Activated T-helper 1 cell treated with anti-CD3 and anti-CD28 coated beads, Interleukin-12 subunit alpha, Interleukin-12 subunit beta, Interleukin-2, Interleukin-4 antibody, amounts not matched to agents 30 ng/mL and 10 ng/mL and 1 ng/mL, durations not matched to agents 14 hours and 24 hours and 36 hours (primary cell): ENCODE measurements at regions of chr5 and their contacts with region 1.

Region 1: GRCh38 chr5:115296124-115297022 is at the start of gene CCDC112:
- DNase-seq: peak; percentile 51
- H3K4me3 Mint-ChIP-seq: peak within 1 kb of the TSS; percentile 77
- H3K27ac Mint-ChIP-seq: no peak within 1 kb of the TSS
- H3K4me1 Mint-ChIP-seq: peaks cover 9% of the 10 kb centered on the region
- H3K27me3 Mint-ChIP-seq: peaks cover 53% of the 10 kb centered on the region
- total RNA-seq, gene CCDC112: 0.22 and 0.29 TPM in 2 replicates

Region 2: DNA sequence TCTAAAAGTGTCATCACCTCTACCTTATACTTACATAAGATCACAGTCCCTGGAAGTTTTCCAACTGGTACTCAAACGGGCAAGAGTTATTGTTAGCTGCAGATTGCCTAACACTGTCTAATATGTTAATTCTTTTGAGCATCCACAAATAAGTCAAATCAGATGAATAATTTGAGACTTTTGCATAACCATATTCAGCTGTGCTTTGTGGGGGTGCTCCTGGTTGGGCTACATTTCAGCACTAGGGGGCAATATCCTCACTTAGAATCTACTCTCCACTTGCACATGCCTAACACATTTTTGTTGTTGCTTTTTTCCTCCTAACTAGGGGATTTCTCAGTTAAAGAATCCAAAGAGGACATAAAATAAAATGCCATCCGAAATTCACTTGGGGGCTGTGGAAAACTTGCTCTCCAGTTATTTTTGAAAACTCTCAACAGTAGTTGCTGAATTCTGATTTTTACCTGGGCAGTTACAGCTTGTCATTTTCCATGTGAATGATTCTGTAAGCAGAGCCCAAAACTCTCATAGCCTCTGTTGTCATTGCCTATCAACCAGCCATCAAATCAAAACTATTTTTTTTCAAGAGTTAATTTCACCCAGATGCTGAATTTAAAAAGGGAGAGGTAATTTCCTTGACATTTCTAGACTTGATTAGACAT is 198.2 kb before region 1 on chr5:
- intact Hi-C with region 1: loop called (anchors 5 kb)
- DNase-seq: peak; percentile 8
- H3K4me3 Mint-ChIP-seq: no peak overlapping the region
- H3K27ac Mint-ChIP-seq: no peak overlapping the region
- H3K4me1 Mint-ChIP-seq: no peaks in the 10 kb centered on the region
- H3K27me3 Mint-ChIP-seq: peaks cover 7% of the 10 kb centered on the region

Region 3: DNA sequence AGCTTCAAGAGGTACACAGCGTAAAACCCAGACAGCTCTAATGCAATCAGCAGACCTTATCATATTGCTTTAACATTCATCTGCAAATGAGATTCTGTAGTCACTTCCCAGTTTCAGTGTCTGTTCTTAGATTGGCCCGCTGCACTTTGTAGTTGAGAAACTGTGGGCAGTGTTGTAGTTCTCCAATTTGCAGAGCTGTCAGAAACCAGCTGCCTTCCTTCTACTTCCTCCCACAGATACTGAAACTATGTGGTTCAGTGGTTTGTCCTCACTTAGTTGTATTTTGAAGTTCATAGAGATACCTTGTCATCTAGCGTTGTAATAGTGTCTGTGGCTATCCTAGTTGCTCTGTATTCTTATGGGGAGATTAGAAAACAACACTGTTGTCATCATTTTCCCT is 87.1 kb before region 1 on chr5:
- intact Hi-C with region 1: loop called (anchors 1 kb)
- DNase-seq: peak; percentile 59
- H3K4me3 Mint-ChIP-seq: no peak overlapping the region
- H3K27ac Mint-ChIP-seq: peak overlapping the region; percentile 28
- H3K4me1 Mint-ChIP-seq: peaks cover 17% of the 10 kb centered on the region
- H3K27me3 Mint-ChIP-seq: no peaks in the 10 kb centered on the region

Region 4: GRCh38 chr5:115246361-115246991 is 49.9 kb before region 1 on chr5:
- intact Hi-C with region 1: no loop called
- DNase-seq: no peak
- H3K4me3 Mint-ChIP-seq: no peak overlapping the region
- H3K27ac Mint-ChIP-seq: no peak overlapping the region
- H3K4me1 Mint-ChIP-seq: peaks cover 14% of the 10 kb centered on the region
- H3K27me3 Mint-ChIP-seq: no peaks in the 10 kb centered on the region

Region 5: DNA sequence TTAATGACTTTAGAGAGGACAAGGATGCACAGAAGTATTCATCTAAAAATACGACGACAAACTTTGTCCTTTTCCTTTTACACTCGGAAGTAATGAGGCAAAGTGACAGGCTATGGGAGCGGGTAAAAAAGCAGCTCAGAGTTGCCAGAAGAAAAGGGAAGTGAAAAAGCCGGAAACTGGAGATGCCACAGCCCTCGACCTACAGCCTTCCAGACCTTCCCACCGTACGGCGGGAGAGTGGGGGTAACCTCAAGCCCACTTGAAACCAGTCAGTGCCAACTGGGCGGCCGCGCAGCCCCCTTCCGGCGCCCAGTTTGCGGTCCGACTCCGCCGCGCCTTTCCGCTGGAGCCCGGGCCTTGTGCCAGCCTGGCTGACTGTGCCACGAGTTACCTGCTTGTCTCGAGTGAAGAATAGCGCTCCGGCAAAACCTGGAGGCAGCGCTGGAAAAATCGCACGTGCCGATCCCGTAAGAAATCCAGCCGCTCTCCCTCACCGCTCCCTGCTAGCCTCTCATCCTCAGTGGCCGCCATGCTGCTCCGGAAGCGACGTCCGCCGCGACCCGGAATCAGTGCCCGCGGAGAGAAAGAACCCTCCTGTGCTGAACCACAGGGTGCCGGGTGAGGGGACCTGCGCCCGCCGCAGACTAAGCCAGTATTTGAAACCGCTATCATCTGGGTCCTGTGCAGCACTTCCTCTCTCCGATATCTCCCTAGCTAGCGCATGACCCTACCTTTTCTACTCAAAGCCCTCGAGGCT is 33.9 kb before region 1 on chr5 and contains the start of gene PGGT1B:
- intact Hi-C with region 1: loop called (anchors 1 kb)
- DNase-seq: peak; percentile 64
- H3K4me3 Mint-ChIP-seq: peak within 1 kb of the TSS; percentile 97
- H3K27ac Mint-ChIP-seq: peak within 1 kb of the TSS; percentile 87
- H3K4me1 Mint-ChIP-seq: peaks cover 42% of the 10 kb centered on the region
- H3K27me3 Mint-ChIP-seq: peaks cover 3% of the 10 kb centered on the region
- total RNA-seq, gene PGGT1B: 42.7 and 42.9 TPM in 2 replicates

Region 6: DNA sequence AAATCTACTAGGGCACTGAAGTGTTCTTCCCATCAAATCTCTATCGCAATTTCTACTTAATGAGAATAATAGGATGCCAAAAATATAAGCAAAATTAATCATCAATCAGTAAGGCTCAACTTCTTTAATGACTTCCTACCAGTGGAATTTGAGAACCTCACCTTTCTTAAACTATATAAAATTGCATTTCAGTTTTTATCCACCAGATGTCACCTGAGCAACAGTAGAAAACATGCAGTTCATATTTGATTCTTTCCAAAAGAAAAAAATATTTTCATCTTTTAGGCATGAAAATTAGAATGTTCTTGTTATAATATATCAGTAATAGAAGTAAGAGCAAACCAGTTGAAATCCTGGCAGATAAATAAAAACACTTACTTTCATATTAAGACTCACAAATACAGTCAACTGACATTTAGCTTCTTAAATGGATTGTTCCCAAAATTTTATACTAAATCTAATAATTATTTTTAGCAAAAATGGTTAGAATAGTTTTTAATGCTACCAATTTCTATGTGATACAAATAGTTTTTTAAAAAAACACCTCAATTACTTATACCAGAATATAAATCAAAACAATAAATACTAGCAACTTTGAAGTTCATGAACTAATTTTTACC is 13.5 kb after region 1 on chr5:
- intact Hi-C with region 1: loop called (anchors 1 kb)
- DNase-seq: no peak
- H3K4me3 Mint-ChIP-seq: no peak overlapping the region
- H3K27ac Mint-ChIP-seq: no peak overlapping the region
- H3K4me1 Mint-ChIP-seq: no peaks in the 10 kb centered on the region
- H3K27me3 Mint-ChIP-seq: peaks cover 32% of the 10 kb centered on the region

Region 7: DNA sequence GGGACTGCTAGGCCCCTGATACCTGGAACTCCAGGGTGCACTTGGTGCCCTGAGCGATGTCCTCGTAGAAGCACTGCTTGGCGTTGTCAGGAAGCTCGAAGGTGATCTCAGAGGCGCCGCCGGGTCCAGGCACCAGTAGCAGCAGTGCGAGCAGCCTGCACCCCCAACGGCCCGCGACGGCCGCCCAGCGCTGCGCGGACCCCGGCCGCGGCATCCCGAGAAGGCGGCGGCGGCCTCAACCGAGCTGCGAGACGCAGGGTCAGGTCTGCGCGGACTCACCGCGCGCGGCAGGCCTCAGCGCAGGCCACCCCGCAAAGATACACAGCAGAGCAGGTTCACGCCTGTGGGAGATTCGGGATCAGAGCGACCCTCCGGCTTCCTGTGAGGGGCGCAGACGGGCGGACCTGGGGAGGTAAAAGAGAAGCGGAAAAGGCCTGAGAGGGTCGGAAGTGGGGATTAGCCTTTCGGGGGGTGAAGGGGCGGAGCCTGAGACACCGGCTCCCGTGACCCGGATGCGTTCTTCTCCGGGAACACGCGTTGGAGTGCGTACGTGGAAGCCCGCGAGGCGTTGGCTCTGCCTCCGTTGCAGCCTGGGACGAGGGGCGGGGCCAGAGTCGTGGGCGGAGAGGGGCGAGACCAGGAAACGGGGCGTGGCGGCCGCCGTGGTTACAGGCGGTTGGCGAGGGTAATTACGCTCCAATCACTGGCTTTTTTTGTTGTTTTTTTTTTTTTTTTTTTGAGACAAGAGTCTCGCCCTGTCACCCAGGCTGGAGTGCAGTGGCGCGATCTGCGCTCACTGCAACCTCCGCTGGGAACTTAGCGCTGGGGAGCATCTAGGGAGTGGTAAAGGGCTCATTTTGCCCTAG is 329.4 kb after region 1 on chr5 and contains the start of gene TMED7:
- intact Hi-C with region 1: loop called (anchors 1 kb)
- DNase-seq: peak; percentile 99
- H3K4me3 Mint-ChIP-seq: no peak within 1 kb of the TSS
- H3K27ac Mint-ChIP-seq: peak within 1 kb of the TSS; percentile 88
- H3K4me1 Mint-ChIP-seq: peaks cover 32% of the 10 kb centered on the region
- H3K27me3 Mint-ChIP-seq: peaks cover 12% of the 10 kb centered on the region
- total RNA-seq, gene TMED7: 43.4 and 44.0 TPM in 2 replicates